CD4-positive, alpha-beta memory T cell (primary cell): ENCODE measurements at regions of chr17 and their contacts with region 1.

Region 1: DNA sequence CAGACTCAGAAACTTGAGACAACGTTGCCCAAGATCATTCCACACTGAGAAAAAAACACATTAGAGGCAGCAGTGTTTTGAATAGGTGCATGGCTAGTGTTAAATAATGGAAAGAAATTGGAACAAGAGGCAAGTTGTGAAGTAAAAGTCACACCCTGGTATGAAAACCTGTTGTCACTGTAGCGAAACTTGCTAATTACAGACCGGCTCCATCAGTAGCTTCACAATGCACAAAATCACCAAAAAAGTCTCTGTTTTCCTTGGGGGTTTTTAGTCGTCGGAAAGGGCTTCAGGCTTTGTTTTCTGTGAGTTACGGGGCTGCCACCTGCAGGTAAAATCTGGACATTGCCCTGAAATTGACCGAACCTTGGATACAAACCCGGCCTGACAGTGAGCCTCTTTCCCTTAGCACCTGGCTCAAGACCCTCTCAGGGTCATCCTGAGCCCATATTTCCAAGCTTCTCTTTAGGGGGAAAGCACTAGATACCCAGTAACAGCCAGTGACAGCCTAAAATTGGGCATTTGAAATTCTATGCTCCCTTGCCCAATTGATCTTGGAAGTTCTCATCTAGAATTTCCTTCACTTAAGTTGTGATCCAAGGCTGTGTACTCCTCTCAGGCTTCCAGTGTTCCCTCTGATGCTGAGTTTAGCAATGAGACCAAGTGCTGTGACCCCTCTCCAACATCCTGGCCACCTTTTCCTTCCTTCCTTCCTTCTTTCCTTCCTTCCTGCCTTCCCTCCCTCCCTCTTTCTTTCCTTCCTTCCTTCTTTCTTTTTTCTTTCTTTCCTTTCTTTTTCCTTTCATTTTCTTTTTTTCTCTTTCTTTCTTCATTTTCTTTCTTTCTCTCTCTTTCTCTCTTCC is 7.2 kb upstream of the GRB2 start:
- DNase-seq: peak; percentile 66 to 79 (median 77)
- H3K4me3 ChIP-seq: no peak overlapping the region
- H3K4me3 Mint-ChIP-seq: peak overlapping the region in 7 of 8 donors; percentile 0 to 68 (median 6)
- H3K27ac ChIP-seq: no peak overlapping the region
- H3K27ac Mint-ChIP-seq: peak overlapping the region in 5 of 7 donors; percentile 0 to 29 (median 3)
- H3K4me1 ChIP-seq: peaks cover 13% of the 10 kb centered on the region
- H3K4me1 Mint-ChIP-seq: peaks cover 7 to 16% (median 11%) of the 10 kb centered on the region in 4 donors
- H3K27me3 ChIP-seq: no peaks in the 10 kb centered on the region
- H3K27me3 Mint-ChIP-seq: peaks cover 5 to 6% of the 10 kb centered on the region in 2 donors

Region 2: GRCh38 chr17:75271233-75271954 is 141.3 kb before region 1 on chr17:
- CTCF ChIA-PET with region 1: interaction called, 8 read pairs
- POLR2A ChIA-PET with region 1: interaction called, 4 read pairs
- intact Hi-C with region 1: loop called (anchors 1 kb)
- DNase-seq: peak; percentile 86 to 94 (median 88)
- H3K4me3 ChIP-seq: peak overlapping the region; percentile 42 to 82
- H3K4me3 Mint-ChIP-seq: peak overlapping the region; percentile 80 to 91 (median 84)
- H3K27ac ChIP-seq: peak overlapping the region; percentile 89
- H3K27ac Mint-ChIP-seq: peak overlapping the region; percentile 25 to 94 (median 88)
- H3K4me1 ChIP-seq: peaks cover 27% of the 10 kb centered on the region
- H3K4me1 Mint-ChIP-seq: peaks cover 10 to 35% (median 22%) of the 10 kb centered on the region in 4 donors
- H3K27me3 ChIP-seq: no peaks in the 10 kb centered on the region
- H3K27me3 Mint-ChIP-seq: no peaks in the 10 kb centered on the region